HepG2 (cell line): ENCODE measurements at regions of chr1 and their contacts with region 1.

Region 1: GRCh38 chr1:205933671-205934618 is 9.3 kb downstream of the SLC26A9 start:
- DNase-seq: peak; percentile 87
- ATAC-seq: peak; percentile 58
- H3K4me3 ChIP-seq: no peak overlapping the region
- H3K27ac ChIP-seq: no peak overlapping the region
- H3K4me1 ChIP-seq: peaks cover 33% of the 10 kb centered on the region
- H3K27me3 ChIP-seq: peaks cover 2 to 37% of the 10 kb centered on the region in 2 experiments; a peak in 4 of 5 replicates
- CTCF ChIP-seq: no peak
- EP300 ChIP-seq: peak in 1 of 2 experiments; percentile 29; a peak in 1 of 4 replicates
- POLR2A ChIP-seq: no peak
- RAD21 ChIP-seq: no peak

Region 2: DNA sequence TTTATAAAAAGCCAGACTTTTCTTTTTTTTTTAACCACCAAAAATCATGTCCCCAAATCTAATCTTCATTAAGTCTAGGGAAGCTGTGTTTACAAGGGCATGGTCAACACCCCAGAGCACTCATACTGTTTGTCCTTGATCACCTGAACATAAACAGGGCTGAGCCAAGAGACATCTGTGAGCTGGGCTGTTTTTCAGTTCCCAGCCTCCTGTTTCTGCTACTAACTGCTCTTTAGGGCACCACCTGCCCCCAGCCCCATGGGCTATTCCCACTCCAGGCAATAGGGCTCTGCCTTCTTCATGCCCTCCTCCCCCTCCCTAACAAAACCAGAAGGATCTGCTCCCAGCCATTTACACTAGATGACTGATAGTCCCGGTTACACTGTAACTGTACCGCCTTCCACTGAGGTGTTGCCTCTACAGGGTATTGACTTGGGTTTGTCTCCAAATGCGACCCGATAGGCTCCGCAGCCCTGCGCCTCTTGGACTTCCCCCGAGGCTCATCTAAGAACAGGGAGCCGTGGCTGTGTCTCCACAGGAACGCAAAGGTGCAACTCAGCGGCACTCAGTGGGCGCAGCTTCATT is 21.0 kb after region 1 on chr1:
- CTCF ChIA-PET with region 1: no interaction called
- POLR2A ChIA-PET with region 1: no interaction called
- in situ Hi-C with region 1: no loop called
- intact Hi-C with region 1: loop called (anchors 2 kb)
- DNase-seq: no peak
- ATAC-seq: no peak
- H3K4me3 ChIP-seq: no peak overlapping the region
- H3K27ac ChIP-seq: no peak overlapping the region
- H3K4me1 ChIP-seq: no peaks in the 10 kb centered on the region
- H3K27me3 ChIP-seq: peaks cover 1 to 40% of the 10 kb centered on the region in 2 experiments; a peak in 3 of 5 replicates
- CTCF ChIP-seq: no peak
- EP300 ChIP-seq: no peak
- POLR2A ChIP-seq: no peak
- RAD21 ChIP-seq: no peak